ENCODE measurements at regions of chr9 and their contacts with region 1.

Region 1: DNA sequence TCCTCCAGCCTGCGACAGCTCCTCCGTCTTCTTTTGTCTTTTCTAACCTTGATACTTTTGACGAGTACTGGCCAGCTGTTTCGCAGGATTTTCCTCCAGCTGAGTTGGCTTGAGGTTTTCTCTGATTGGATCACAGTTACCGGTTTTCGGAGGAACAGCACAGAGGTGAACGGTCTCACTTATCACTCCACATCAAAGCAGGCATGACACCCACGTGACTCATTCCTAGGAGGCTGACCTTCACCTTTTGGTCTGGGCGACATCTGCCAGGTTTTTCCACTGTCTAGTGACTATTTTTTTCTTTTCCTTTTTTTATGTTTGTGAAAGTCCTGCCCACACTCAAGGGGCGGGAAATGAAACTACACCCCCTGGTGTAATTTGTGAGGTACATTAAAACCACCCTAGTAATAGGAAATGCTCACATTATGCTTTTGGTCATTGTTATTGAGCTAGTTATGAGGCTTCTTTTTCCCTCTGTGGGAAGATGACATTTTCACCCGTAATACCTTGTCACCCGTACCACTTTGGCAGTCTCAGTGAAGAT is 319.2 kb downstream of the GADD45G start:
- DNase-seq: no peak
- H3K4me3 ChIP-seq: no peak overlapping the region
- H3K27ac ChIP-seq: no peak overlapping the region
- H3K4me1 ChIP-seq: no peaks in the 10 kb centered on the region
- H3K27me3 ChIP-seq: no peaks in the 10 kb centered on the region
- CTCF ChIP-seq: no peak

Region 2: GRCh38 chr9:89089176-89089575 is 834.9 kb before region 1 on chr9:
- CTCF ChIA-PET with region 1: interaction called, 10 read pairs
- POLR2A ChIA-PET with region 1: no interaction called
- intact Hi-C with region 1: no loop called
- DNase-seq: no peak
- H3K4me3 ChIP-seq: no peak overlapping the region
- H3K27ac ChIP-seq: no peak overlapping the region
- H3K4me1 ChIP-seq: no peaks in the 10 kb centered on the region
- H3K27me3 ChIP-seq: no peaks in the 10 kb centered on the region
- CTCF ChIP-seq: no peak

Measured in A673 (cell line).